Activated T-helper 1 cell treated with anti-CD3 and anti-CD28 coated beads, Interleukin-12 subunit alpha, Interleukin-12 subunit beta, Interleukin-2, Interleukin-4 antibody, amounts not matched to agents 30 ng/mL and 10 ng/mL and 1 ng/mL, durations not matched to agents 14 hours and 24 hours and 36 hours (primary cell): ENCODE measurements at regions of chr20 and their contacts with region 1.

Region 1: DNA sequence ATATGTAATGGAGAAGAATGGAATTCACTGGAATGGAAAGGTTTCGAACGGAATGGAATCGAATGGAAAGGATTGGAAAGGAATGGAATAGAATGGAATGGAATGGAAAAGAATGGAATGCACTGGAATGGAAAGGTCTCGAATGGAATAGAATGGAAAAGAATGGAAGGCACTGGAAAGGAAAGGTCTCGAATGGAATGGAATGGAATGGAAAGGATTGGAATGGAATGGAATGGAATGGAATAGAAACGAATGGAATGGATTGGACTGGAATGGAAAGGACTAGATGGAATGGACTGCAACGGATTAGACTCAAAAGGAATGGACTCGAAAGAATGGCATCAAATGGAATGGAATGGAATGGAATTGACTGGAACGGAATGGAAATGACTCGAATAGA is 20.5 kb upstream of the DEFB115 start:
- DNase-seq: no peak
- H3K4me3 Mint-ChIP-seq: no peak overlapping the region
- H3K27ac Mint-ChIP-seq: no peak overlapping the region
- H3K4me1 Mint-ChIP-seq: no peaks in the 10 kb centered on the region
- H3K27me3 Mint-ChIP-seq: no peaks in the 10 kb centered on the region

Region 2: DNA sequence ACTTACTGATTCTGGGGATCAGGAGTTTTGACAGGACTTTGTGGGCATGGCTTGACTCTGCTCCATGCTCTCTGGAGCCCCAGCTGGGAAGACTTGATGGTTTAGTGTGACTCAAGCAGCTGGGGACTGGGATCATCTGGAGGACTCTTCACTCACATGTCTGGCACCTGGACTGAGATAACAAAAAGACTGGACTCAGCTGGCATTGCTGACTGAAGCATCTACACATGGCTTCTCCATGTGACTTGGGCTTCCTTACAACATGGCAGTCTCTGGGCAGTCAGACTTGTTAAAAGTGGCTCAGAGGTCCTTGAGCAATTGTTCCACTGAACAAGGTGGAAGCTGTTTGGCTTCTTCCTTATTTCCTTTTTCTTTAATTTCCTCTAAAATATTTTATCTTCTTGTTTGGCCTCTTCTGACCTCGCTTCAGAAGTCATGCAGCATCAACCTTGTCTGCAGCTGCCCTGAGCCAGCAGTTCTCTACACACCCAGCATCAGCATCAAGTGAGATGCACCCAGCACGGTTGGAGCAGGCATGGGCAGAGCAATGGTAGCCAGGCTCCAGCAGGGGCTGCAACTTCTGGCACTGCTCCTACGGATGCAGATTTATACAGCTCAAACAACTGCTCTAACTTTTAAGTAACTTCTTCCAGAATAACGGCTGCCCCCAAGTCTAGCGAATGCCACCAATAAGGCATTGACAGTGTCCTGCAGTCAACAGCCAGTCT is 271.7 kb after region 1 on chr20:
- intact Hi-C with region 1: loop called (anchors 10 kb)
- DNase-seq: no peak
- H3K4me3 Mint-ChIP-seq: no peak overlapping the region
- H3K27ac Mint-ChIP-seq: no peak overlapping the region
- H3K4me1 Mint-ChIP-seq: peaks cover 3% of the 10 kb centered on the region
- H3K27me3 Mint-ChIP-seq: peaks cover 17% of the 10 kb centered on the region